Transverse colon (tissue), 4 donors: ENCODE measurements at regions of chr1 and their contacts with region 1.

Region 1: GRCh38 chr1:8121261-8122170 is 95.4 kb upstream of the ERRFI1 start:
- DNase-seq: peak; percentile 57
- H3K4me3 ChIP-seq: no peak overlapping the region
- H3K27ac ChIP-seq: peak overlapping the region; percentile 76 to 90 (median 82)
- H3K4me1 ChIP-seq: peaks cover 14 to 39% (median 26%) of the 10 kb centered on the region in 4 donors
- H3K27me3 ChIP-seq: no peaks in the 10 kb centered on the region
- CTCF ChIP-seq: no peak
- EP300 ChIP-seq: peak; percentile 91
- POLR2A ChIP-seq: peak; percentile 8

Region 2: GRCh38 chr1:7808253-7808844 is 313.2 kb before region 1 on chr1:
- in situ Hi-C with region 1: no loop called
- intact Hi-C with region 1: no loop called
- DNase-seq: no peak
- H3K4me3 ChIP-seq: no peak overlapping the region
- H3K27ac ChIP-seq: no peak overlapping the region
- H3K4me1 ChIP-seq: no peaks in the 10 kb centered on the region
- H3K27me3 ChIP-seq: no peaks in the 10 kb centered on the region
- CTCF ChIP-seq: peak; percentile 40 to 53 (median 47)
- EP300 ChIP-seq: no peak
- POLR2A ChIP-seq: no peak

Region 3: GRCh38 chr1:8055973-8056372 is 65.5 kb before region 1 on chr1:
- in situ Hi-C with region 1: no loop called
- intact Hi-C with region 1: loop called (anchors 10 kb)
- DNase-seq: no peak
- H3K4me3 ChIP-seq: no peak overlapping the region
- H3K27ac ChIP-seq: peak overlapping the region in 1 of 4 donors; percentile 33
- H3K4me1 ChIP-seq: peaks cover under 1 to 9% (median 3%) of the 10 kb centered on the region in 4 donors
- H3K27me3 ChIP-seq: no peaks in the 10 kb centered on the region
- CTCF ChIP-seq: no peak
- EP300 ChIP-seq: no peak
- POLR2A ChIP-seq: no peak

Region 4: GRCh38 chr1:8169364-8170058 is 48.0 kb after region 1 on chr1:
- in situ Hi-C with region 1: no loop called
- intact Hi-C with region 1: no loop called
- DNase-seq: peak; percentile 67
- H3K4me3 ChIP-seq: no peak overlapping the region
- H3K27ac ChIP-seq: peak overlapping the region; percentile 74 to 83 (median 78)
- H3K4me1 ChIP-seq: peaks cover 14 to 30% (median 21%) of the 10 kb centered on the region in 4 donors
- H3K27me3 ChIP-seq: no peaks in the 10 kb centered on the region
- CTCF ChIP-seq: peak in 1 of 5 experiments; percentile 41
- EP300 ChIP-seq: peak; percentile 80
- POLR2A ChIP-seq: no peak

Region 5: GRCh38 chr1:8202182-8202905 is 80.8 kb after region 1 on chr1:
- in situ Hi-C with region 1: no loop called
- intact Hi-C with region 1: loop called (anchors 5 kb)
- DNase-seq: peak; percentile 54
- H3K4me3 ChIP-seq: no peak overlapping the region
- H3K27ac ChIP-seq: peak overlapping the region; percentile 72 to 89 (median 88)
- H3K4me1 ChIP-seq: peaks cover 19 to 37% (median 32%) of the 10 kb centered on the region in 4 donors
- H3K27me3 ChIP-seq: no peaks in the 10 kb centered on the region
- CTCF ChIP-seq: no peak
- EP300 ChIP-seq: peak; percentile 65
- POLR2A ChIP-seq: no peak

Region 6: DNA sequence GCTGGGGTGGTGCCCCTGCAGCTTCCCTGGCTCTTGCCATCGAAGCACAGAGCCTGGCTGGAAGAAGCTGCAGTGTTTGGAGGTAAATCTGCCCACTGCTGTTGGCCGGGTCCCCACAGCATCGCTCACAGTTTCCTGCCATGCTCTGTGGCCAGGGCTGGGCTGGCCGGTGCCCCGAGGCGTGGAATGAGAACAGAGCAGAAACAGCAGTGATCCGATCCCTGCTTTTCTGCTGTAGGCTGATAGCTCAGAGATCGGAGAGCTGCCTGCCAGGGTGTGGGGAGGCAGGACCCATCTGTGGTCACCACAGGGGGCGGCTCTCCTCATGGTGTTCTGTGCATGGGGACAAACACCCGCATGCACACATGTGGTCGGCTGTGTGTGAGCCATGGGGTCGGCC is 207.9 kb after region 1 on chr1:
- in situ Hi-C with region 1: no loop called
- intact Hi-C with region 1: no loop called
- DNase-seq: no peak
- H3K4me3 ChIP-seq: no peak overlapping the region
- H3K27ac ChIP-seq: no peak overlapping the region
- H3K4me1 ChIP-seq: no peaks in the 10 kb centered on the region
- H3K27me3 ChIP-seq: no peaks in the 10 kb centered on the region
- CTCF ChIP-seq: no peak
- EP300 ChIP-seq: no peak
- POLR2A ChIP-seq: no peak